H1 (cell line): ENCODE measurements at regions of chr11 and their contacts with region 1.

Region 1: DNA sequence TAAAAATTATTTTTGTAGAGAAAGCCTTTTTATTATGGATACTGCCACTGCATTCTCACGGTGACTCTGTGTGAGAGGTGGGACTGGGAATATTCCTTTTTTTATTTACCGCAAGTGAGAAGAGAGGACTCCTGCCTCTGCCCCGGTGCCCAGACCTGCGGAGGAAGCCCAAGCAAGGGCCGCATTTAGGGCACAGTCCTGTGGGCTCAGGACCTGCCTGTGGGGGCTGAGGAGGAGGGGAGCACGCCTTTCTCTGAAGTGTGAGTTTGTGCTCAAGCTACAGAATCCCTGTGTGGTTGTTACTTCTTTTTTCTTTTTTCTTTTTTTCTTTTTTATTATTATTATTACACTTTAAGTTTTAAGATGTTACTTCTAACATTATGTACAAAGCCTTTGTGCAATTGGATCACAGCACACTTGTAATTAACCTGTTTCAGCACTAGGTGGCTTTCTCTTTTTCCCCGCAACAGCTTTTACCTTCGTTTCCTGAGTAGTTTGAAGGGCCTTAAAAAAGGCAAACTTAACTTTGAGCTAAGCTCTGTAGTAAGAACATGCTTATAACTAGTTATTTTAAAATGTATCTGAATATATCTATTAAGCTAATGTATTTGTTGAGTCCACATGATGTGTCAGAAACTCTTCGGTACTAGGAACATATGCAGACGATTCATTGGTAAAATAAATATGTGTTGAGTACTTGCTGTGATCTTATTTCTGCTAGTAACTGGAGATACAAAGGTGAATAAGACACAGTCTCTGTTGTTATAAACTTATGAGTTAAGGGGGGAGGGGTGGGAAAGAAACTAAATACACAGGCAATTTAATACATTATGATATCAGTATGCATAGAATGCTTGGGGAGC is 18.3 kb downstream of the AMOTL1 start:
- DNase-seq: no peak
- H3K4me3 ChIP-seq: no peak overlapping the region
- H3K27ac ChIP-seq: no peak overlapping the region
- H3K4me1 ChIP-seq: peaks cover 0 to 7% (median 2%) of the 10 kb centered on the region in 4 experiments; a peak in 2 of 7 replicates
- H3K27me3 ChIP-seq: no peaks in the 10 kb centered on the region
- CTCF ChIP-seq: peak in 2 of 3 experiments; percentile 48 to 59; a peak in 3 of 4 replicates
- EP300 ChIP-seq: no peak
- POLR2A ChIP-seq: no peak
- RAD21 ChIP-seq: peak; percentile 32 to 43

Region 2: DNA sequence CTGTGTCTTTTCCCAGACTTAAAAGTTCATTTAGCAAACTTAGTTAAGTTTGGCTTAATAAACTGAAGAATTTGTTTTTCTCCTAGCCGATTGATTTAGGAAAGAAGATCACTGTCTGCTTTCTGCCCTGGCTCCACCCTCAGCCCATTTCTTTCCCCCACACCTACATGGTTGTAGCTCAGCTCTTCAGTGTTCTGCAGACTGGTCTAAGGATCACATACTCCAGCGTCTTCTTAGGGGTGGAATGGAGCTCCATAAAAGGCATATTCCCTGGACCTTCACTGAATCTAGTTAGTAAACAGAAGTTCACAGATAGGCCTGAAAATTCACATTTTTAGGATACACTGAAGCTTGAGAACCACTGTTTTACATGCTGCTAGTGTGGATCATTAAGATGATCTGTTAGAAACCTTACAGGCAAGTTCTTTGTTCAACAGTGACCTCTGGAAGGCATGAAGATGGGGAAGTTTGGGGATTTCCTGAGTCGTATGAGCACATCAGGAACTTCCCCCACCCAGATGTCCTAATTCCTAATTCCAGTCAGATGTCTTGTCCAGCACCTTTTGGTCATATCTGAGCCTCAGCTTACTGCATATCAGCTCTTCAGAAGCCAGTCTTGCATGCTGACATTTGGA is 202.5 kb before region 1 on chr11:
- CTCF ChIA-PET with region 1: no interaction called
- POLR2A ChIA-PET with region 1: no interaction called
- DNase-seq: no peak
- H3K4me3 ChIP-seq: no peak overlapping the region
- H3K27ac ChIP-seq: no peak overlapping the region
- H3K4me1 ChIP-seq: no peaks in the 10 kb centered on the region
- H3K27me3 ChIP-seq: no peaks in the 10 kb centered on the region; a peak in 2 of 7 replicates
- CTCF ChIP-seq: no peak
- EP300 ChIP-seq: no peak
- POLR2A ChIP-seq: no peak
- RAD21 ChIP-seq: no peak

Region 3: GRCh38 chr11:94767761-94768601 is 18.5 kb before region 1 on chr11 and contains the start of gene AMOTL1:
- CTCF ChIA-PET with region 1: interaction called, 44 read pairs
- POLR2A ChIA-PET with region 1: interaction called, 3 read pairs
- DNase-seq: peak; percentile 61 to 90
- H3K4me3 ChIP-seq: peak within 1 kb of the TSS; percentile 75 to 94 (median 78)
- H3K27ac ChIP-seq: no peak within 1 kb of the TSS
- H3K4me1 ChIP-seq: peaks cover 0 to 24% (median 17%) of the 10 kb centered on the region in 4 experiments
- H3K27me3 ChIP-seq: peaks cover 8 to 51% (median 43%) of the 10 kb centered on the region in 4 experiments
- CTCF ChIP-seq: no peak; a peak in 1 of 4 replicates
- EP300 ChIP-seq: peak in 1 of 2 experiments; percentile 42; a peak in 1 of 3 replicates
- POLR2A ChIP-seq: no peak; a peak in 1 of 3 replicates
- RAD21 ChIP-seq: peak; percentile 30 to 48; a peak in 2 of 4 replicates
- total RNA-seq, gene AMOTL1: 27.6 and 31.6 TPM in 2 replicates

Region 4: DNA sequence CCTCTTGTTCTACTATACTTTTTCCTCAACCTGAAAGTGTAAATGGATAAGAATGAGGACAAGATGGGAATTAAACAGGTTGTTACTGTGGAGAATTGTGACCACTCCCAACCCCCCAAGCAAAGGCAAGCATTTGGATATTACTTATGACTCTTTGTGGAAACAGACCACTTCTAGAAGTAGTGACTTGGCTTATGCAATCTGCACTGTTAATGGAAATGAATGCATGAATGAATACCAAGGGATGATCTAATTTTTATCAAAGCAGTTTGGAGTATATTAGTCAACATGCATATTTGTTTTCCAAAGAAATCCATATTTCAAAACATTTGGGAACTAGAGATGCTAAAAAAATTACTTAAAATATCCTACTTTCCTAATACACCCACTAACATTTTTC is 17.0 kb after region 1 on chr11:
- CTCF ChIA-PET with region 1: interaction called, 22 read pairs
- POLR2A ChIA-PET with region 1: no interaction called
- DNase-seq: no peak
- H3K4me3 ChIP-seq: no peak overlapping the region
- H3K27ac ChIP-seq: no peak overlapping the region
- H3K4me1 ChIP-seq: no peaks in the 10 kb centered on the region
- H3K27me3 ChIP-seq: no peaks in the 10 kb centered on the region
- CTCF ChIP-seq: no peak
- EP300 ChIP-seq: no peak
- POLR2A ChIP-seq: no peak
- RAD21 ChIP-seq: no peak

Region 5: GRCh38 chr11:94814272-94814976 is 27.9 kb after region 1 on chr11:
- CTCF ChIA-PET with region 1: interaction called, 22 read pairs
- POLR2A ChIA-PET with region 1: no interaction called
- DNase-seq: no peak
- H3K4me3 ChIP-seq: no peak overlapping the region
- H3K27ac ChIP-seq: no peak overlapping the region
- H3K4me1 ChIP-seq: peaks cover 0 to 5% (median under 1%) of the 10 kb centered on the region in 4 experiments; a peak in 2 of 7 replicates
- H3K27me3 ChIP-seq: no peaks in the 10 kb centered on the region
- CTCF ChIP-seq: no peak
- EP300 ChIP-seq: no peak
- POLR2A ChIP-seq: no peak
- RAD21 ChIP-seq: no peak

Region 6: DNA sequence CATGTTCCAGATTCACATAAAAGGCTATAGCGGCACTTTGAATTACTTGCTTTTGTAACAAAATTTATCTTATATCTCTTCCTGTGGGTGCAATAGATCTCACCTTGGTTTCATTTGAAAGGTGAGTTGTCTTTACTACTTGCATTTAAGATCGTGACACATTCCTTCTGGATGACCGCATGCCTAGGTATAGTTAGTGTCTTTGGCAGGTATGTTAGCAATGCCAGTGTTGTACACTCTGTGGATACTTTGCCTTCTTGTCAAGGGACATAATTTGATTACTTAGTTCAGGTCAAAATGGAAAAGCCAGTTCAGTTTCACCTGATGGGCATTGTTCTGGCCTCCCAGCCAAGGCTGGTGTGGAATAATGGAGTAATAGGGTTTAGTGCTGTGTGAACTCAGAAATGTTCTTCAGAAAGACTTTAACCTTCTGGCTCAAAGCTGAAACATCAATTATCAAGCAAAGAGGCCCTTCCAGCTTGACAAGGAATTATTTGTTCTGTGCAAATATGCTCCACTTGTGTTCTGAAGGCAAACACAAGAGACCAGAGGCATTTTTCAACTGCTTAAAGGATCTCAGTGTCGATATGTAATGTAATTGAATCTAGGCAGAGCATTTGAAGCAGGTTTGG is 46.2 kb after region 1 on chr11:
- CTCF ChIA-PET with region 1: interaction called, 15 read pairs
- POLR2A ChIA-PET with region 1: no interaction called
- DNase-seq: no peak
- H3K4me3 ChIP-seq: no peak overlapping the region
- H3K27ac ChIP-seq: no peak overlapping the region
- H3K4me1 ChIP-seq: no peaks in the 10 kb centered on the region
- H3K27me3 ChIP-seq: no peaks in the 10 kb centered on the region
- CTCF ChIP-seq: no peak
- EP300 ChIP-seq: no peak
- POLR2A ChIP-seq: no peak
- RAD21 ChIP-seq: no peak